Calu3 (cell line): ENCODE measurements at regions of chr6 and their contacts with region 1.

Region 1: GRCh38 chr6:44304282-44305199 is 8.6 kb downstream of the AARS2 start:
- DNase-seq: peak; percentile 62
- H3K4me3 Mint-ChIP-seq: no peak overlapping the region
- H3K27ac Mint-ChIP-seq: no peak overlapping the region
- H3K4me1 Mint-ChIP-seq: no peaks in the 10 kb centered on the region
- H3K27me3 Mint-ChIP-seq: peaks cover 2% of the 10 kb centered on the region
- CTCF ChIP-seq: peak; percentile 88

Region 2: GRCh38 chr6:44268095-44268628 is 36.4 kb before region 1 on chr6:
- CTCF ChIA-PET with region 1: interaction called, 25 read pairs
- intact Hi-C with region 1: loop called (anchors 2 kb)
- DNase-seq: peak; percentile 77
- H3K4me3 Mint-ChIP-seq: no peak overlapping the region
- H3K27ac Mint-ChIP-seq: no peak overlapping the region
- H3K4me1 Mint-ChIP-seq: peaks cover 16% of the 10 kb centered on the region
- H3K27me3 Mint-ChIP-seq: peaks cover 71% of the 10 kb centered on the region
- CTCF ChIP-seq: peak; percentile 88

Region 3: GRCh38 chr6:44342489-44342888 is 37.9 kb after region 1 on chr6 and contains the start of gene SPATS1:
- CTCF ChIA-PET with region 1: no interaction called
- intact Hi-C with region 1: no loop called
- DNase-seq: no peak
- H3K4me3 Mint-ChIP-seq: peak within 1 kb of the TSS; percentile 43
- H3K27ac Mint-ChIP-seq: no peak within 1 kb of the TSS
- H3K4me1 Mint-ChIP-seq: no peaks in the 10 kb centered on the region
- H3K27me3 Mint-ChIP-seq: peaks cover 59% of the 10 kb centered on the region
- CTCF ChIP-seq: no peak
- total RNA-seq, gene SPATS1: not detected in 2 replicates